ENCODE measurements at regions of chr12 and their contacts with region 1.

Region 1: DNA sequence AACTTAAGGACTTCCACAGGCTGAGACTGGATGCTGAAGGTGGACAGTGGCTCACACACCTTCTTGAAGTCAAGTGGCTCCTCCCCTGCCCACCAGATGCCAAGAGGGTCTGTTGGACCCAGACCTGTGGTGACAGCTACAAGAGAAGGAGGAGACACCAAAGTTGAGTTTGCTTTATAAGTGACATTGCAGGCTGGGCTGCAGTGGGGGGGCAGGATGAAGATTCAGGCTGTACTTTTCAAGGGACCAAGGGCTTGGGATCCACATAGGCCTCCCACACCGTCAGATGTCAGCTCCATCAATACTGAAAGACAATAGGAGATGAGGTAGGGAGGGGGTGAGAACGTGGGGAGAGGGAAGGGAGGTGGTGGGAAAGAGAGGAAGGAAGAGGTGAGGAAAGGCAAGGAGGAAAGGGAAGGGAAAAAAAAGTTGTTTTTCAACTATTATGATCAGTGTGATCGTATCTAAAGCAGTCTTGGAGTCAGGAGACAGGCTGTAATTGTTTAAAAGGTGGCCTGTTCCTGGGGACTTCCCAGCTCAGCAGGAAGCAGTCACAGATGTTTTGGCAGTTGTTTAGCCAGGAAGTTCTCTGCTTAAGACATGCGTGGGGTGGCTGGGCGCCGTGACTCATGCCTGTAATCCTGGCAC is 84.1 kb upstream of the RESF1 start:
- DNase-seq: peak; percentile 47 to 94 (median 73)
- ATAC-seq: peak; percentile 93
- H3K4me3 ChIP-seq: peak overlapping the region in 1 of 2 experiments; percentile 6
- H3K4me3 Mint-ChIP-seq: peak overlapping the region; percentile 63
- H3K27ac ChIP-seq: peak overlapping the region; percentile 66 to 92
- H3K27ac Mint-ChIP-seq: peak overlapping the region; percentile 98
- H3K4me1 ChIP-seq: peaks cover 18% of the 10 kb centered on the region
- H3K4me1 Mint-ChIP-seq: peaks cover 55% of the 10 kb centered on the region
- H3K27me3 ChIP-seq: no peaks in the 10 kb centered on the region
- H3K27me3 Mint-ChIP-seq: no peaks in the 10 kb centered on the region
- CTCF ChIP-seq: no peak

Region 2: GRCh38 chr12:31890295-31891285 is 15.5 kb after region 1 on chr12:
- CTCF ChIA-PET with region 1: interaction called, 11 read pairs
- POLR2A ChIA-PET with region 1: interaction called, 4 read pairs
- intact Hi-C with region 1: no loop called
- DNase-seq: peak in 3 of 9 experiments; percentile 16 to 81 (median 64)
- ATAC-seq: peak; percentile 89
- H3K4me3 ChIP-seq: no peak overlapping the region
- H3K4me3 Mint-ChIP-seq: peak overlapping the region; percentile 51
- H3K27ac ChIP-seq: peak overlapping the region; percentile 19 to 66
- H3K27ac Mint-ChIP-seq: peak overlapping the region; percentile 90
- H3K4me1 ChIP-seq: peaks cover 70% of the 10 kb centered on the region
- H3K4me1 Mint-ChIP-seq: peaks cover 60% of the 10 kb centered on the region
- H3K27me3 ChIP-seq: no peaks in the 10 kb centered on the region
- H3K27me3 Mint-ChIP-seq: no peaks in the 10 kb centered on the region
- CTCF ChIP-seq: no peak

Measured in CD8-positive, alpha-beta T cell (primary cell).